ENCODE measurements at regions of chr2 and their contacts with region 1.

Region 1: DNA sequence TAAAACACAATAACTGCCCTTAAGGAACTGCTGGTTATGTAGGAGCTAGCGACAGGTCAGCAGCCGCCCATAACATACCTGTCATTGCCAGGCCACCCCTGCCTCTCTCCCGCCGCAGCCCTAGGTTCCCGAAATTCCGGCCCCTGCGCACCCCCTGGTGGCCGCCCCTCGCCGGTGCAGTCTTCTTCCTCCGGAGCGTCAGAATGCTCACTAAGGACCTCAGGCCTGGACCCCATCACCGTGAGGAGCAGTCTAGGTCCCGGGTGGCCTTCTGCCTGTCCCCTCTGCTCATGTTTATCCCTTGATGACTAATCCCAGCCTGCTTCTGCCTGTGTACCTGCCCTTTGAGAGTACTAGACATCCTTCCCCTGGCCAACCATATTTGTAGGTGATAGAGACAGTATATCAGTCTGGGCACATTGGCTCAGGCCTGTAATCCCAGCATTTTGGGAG is 115.7 kb upstream of the SLC1A4 start:
- DNase-seq: peak; percentile 75 to 84
- ATAC-seq: peak; percentile 75 to 90 (median 82)
- H3K4me3 ChIP-seq: peak overlapping the region in 7 of 10 donors; percentile 19 to 36 (median 29)
- H3K27ac ChIP-seq: no peak overlapping the region
- H3K4me1 ChIP-seq: peaks cover 0 to 22% (median 15%) of the 10 kb centered on the region in 9 donors
- H3K27me3 ChIP-seq: no peaks in the 10 kb centered on the region
- CTCF ChIP-seq: peak; percentile 96 to 98 (median 97)

Region 2: DNA sequence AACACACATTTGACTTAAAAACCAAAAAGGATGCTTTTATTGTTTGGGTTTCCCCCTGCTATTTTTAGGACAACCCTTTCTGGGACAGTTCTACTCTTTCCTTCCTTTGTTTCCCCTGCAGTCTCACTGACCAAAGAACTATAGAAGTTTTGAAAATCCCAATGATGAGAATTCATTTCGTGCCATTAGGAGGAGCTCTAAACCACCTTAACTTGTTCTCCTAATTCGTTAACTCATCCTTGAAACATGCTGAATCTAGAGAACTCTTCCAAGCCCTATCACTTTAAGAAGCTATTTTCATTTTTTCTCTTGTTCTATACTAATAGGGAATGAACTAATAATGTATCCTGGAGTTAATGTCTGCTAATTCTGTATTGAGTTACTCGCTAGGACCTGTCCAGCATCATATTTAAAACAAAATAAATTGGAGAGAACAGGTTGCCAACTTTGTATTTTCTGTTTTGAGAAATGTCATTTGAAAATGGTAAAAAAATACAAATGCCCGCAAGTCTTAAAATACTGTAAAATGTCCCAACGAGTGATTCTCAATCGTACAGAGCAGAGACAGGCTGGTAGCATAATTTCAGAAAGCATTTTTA is 286.5 kb before region 1 on chr2:
- intact Hi-C with region 1: loop called in 3 of 10 experiments (anchors 5 kb)
- DNase-seq: no peak
- ATAC-seq: peak in 6 of 8 donors; percentile 55 to 77 (median 65)
- H3K4me3 ChIP-seq: no peak overlapping the region
- H3K27ac ChIP-seq: no peak overlapping the region
- H3K4me1 ChIP-seq: peaks cover 0 to 13% (median 8%) of the 10 kb centered on the region in 9 donors
- H3K27me3 ChIP-seq: no peaks in the 10 kb centered on the region
- CTCF ChIP-seq: peak; percentile 27 to 80 (median 65)

Region 3: DNA sequence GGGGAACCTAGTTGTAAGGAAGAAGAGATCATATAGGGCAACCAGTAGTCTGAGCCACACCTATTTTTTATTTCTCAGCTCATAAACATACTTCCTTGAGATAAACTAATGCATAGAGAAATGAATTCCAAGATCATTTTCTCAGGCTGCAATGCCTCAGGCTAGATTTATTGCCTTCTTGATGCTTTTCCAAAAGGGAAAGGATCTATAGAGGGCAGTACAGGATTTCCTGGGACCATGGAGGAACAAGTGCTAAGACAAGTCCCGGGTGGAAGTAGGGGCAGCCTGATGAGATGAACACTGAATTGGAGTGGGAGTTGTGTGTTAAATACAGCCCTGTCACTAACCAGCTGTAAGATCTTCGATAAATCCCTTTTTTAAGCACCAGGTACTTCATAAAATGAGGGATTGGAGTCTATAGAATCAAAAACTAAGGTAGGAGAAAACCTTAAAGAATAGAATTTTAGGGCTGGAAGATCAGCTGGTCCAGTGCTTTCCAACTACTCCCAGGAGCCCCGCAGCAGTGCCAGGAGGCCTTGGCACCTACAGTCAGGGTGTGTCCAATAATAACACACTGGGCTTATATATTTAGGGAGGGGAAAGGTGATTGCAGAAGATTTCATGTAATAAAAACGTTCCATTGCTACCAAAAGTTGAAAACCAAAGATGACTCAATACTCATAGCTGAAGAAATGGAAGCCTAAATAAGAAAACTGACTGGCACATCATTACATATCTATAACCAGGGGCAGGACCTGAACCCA is 277.9 kb before region 1 on chr2:
- intact Hi-C with region 1: loop called in 2 of 10 experiments (anchors 5 kb)
- DNase-seq: no peak
- ATAC-seq: no peak
- H3K4me3 ChIP-seq: no peak overlapping the region
- H3K27ac ChIP-seq: no peak overlapping the region
- H3K4me1 ChIP-seq: peaks cover 0 to 26% (median 9%) of the 10 kb centered on the region in 9 donors
- H3K27me3 ChIP-seq: no peaks in the 10 kb centered on the region
- CTCF ChIP-seq: peak in 6 of 9 donors; percentile 7 to 52 (median 36)

Region 4: DNA sequence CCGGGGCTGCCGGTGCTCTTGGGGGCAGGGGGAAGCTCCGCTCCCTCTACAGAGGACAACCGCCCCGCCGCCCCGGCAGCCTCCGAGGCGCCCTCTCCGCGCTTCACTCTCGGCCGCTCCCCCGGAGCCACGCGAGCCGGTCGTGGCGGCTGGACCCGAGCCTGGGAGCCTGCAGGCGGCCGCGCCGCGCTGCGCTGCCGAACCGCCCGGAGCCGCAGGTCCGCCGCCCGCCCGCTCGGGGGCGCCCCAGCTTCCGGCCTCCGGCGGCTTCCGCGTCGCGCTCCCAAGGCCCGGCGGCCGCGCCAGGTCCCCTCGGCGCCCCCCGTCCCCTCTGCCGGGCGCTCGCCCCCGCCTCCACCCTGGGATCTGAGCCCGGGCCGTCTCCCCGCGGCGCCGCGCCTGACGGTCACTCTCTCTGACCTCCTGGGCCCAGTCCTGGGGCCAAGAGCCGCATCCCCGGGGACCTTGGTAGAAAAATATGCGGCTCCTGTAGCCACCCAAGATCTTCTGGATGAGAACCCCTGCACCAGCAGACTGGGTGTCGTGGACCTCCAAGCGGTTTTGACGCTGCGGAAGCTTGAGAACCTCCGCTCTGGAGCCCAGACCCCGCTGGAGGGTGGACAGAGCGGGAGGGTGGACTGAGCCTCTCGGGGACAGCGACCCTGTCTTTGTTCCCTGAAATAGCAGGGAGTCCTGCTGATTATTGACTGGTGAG is 264.1 kb before region 1 on chr2:
- intact Hi-C with region 1: loop called in 4 of 10 experiments (anchors 5 kb)
- DNase-seq: peak; percentile 44 to 77
- ATAC-seq: peak; percentile 46 to 85 (median 72)
- H3K4me3 ChIP-seq: peak overlapping the region; percentile 47 to 79 (median 66)
- H3K27ac ChIP-seq: peak overlapping the region in 9 of 10 donors; percentile 66 to 92 (median 83)
- H3K4me1 ChIP-seq: peaks cover 0 to 34% (median 15%) of the 10 kb centered on the region in 9 donors
- H3K27me3 ChIP-seq: no peaks in the 10 kb centered on the region
- CTCF ChIP-seq: peak in 6 of 9 donors; percentile 18 to 72 (median 52)

Region 5: GRCh38 chr2:64899081-64899865 is 25.8 kb after region 1 on chr2:
- intact Hi-C with region 1: no loop called
- DNase-seq: no peak
- ATAC-seq: no peak
- H3K4me3 ChIP-seq: no peak overlapping the region
- H3K27ac ChIP-seq: peak overlapping the region in 1 of 10 donors; percentile 44
- H3K4me1 ChIP-seq: peaks cover 0 to 7% (median 0%) of the 10 kb centered on the region in 9 donors
- H3K27me3 ChIP-seq: no peaks in the 10 kb centered on the region
- CTCF ChIP-seq: no peak

Region 6: GRCh38 chr2:64978514-64979268 is 105.2 kb after region 1 on chr2:
- intact Hi-C with region 1: no loop called
- DNase-seq: no peak
- ATAC-seq: peak in 2 of 8 donors; percentile 37 to 43
- H3K4me3 ChIP-seq: no peak overlapping the region
- H3K27ac ChIP-seq: no peak overlapping the region
- H3K4me1 ChIP-seq: peaks cover 0 to 43% (median 11%) of the 10 kb centered on the region in 9 donors
- H3K27me3 ChIP-seq: no peaks in the 10 kb centered on the region
- CTCF ChIP-seq: peak in 7 of 9 donors; percentile 12 to 51 (median 34)

Measured in heart right ventricle (tissue), 16 donors.